ENCODE measurements at regions of chr17 and their contacts with region 1.

Region 1: GRCh38 chr17:74677558-74678466 is 34.9 kb downstream of the CD300LF start:
- DNase-seq: no peak
- ATAC-seq: no peak
- H3K4me3 Mint-ChIP-seq: no peak overlapping the region
- H3K27ac Mint-ChIP-seq: no peak overlapping the region
- H3K4me1 Mint-ChIP-seq: peaks cover 16% of the 10 kb centered on the region
- H3K27me3 Mint-ChIP-seq: peaks cover 15% of the 10 kb centered on the region
- CTCF ChIP-seq: no peak

Region 2: DNA sequence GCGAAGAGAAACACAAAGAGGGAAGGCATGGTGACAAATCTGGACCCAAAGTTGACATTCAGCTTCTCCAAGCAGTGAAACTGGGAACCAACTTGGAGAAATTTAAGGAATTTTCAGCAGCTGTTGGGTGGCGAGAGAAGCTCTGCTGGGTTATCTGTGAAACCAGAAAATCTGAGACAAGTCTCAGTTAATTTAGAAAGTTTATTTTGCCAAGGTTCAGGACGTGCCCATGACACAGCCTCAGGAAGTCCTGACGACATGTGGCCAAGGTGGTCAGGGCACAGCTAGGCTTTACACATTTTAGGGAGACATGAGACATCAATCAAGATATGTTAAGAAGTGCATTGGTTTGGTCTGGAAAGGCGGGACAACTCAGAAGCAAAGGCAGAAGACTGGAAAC is 46.1 kb after region 1 on chr17:
- CTCF ChIA-PET with region 1: no interaction called
- POLR2A ChIA-PET with region 1: no interaction called
- intact Hi-C with region 1: loop called (anchors 5 kb)
- DNase-seq: no peak
- ATAC-seq: no peak
- H3K4me3 Mint-ChIP-seq: no peak overlapping the region
- H3K27ac Mint-ChIP-seq: no peak overlapping the region
- H3K4me1 Mint-ChIP-seq: no peaks in the 10 kb centered on the region
- H3K27me3 Mint-ChIP-seq: no peaks in the 10 kb centered on the region
- CTCF ChIP-seq: no peak

Measured in activated CD8-positive, alpha-beta T cell treated with anti-CD3 and anti-CD28 coated beads for 36 hours (primary cell).